AG04450 (cell line): ENCODE measurements at regions of chr1 and their contacts with region 1.

Region 1: DNA sequence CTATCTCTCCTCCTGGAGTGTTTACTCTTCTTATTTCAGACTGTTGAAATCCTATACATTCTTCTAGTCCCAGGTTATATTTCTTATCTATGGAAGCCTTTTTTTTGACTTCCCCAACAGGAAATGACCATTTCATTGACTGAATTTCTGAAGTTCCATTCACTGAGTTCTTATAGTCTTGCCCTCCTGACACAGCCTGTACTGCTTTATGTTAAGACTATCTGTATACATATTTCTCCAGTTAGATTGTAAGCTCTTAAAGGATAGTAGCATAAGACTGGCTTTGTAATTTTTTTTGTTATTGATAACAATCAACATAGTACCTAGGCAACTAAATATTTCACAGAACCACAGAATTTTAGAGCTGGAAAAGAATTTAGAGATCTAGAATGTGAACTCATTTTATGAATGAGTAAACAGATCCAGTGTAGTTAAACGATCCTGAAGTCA is 14.9 kb upstream of the MACF1 start:
- DNase-seq: no peak
- H3K4me3 ChIP-seq: no peak overlapping the region
- H3K27ac ChIP-seq: peak overlapping the region; percentile 63
- H3K27me3 ChIP-seq: no peaks in the 10 kb centered on the region
- CTCF ChIP-seq: no peak

Region 2: DNA sequence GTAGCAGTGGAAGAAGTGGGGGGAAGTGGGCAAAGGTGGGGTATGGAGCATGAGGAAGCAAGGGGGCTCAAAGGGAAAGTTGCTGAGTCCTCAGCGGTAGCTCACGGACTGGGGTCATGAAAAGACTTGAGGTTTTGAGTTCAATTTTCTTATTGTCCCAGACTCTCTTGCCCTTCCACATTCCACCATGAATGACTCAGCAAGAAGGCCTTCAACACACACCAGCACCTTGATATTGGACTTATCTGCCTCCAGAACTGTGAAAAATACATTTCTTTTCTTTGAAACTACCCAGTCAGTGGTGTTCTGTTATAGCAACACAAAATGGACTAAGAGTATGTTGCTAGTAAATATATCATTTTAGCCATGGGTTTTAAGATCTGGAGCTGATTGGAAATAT is 230.7 kb before region 1 on chr1:
- CTCF ChIA-PET with region 1: no interaction called
- POLR2A ChIA-PET with region 1: no interaction called
- DNase-seq: no peak
- H3K4me3 ChIP-seq: no peak overlapping the region
- H3K27ac ChIP-seq: no peak overlapping the region
- H3K27me3 ChIP-seq: no peaks in the 10 kb centered on the region
- CTCF ChIP-seq: no peak

Region 3: GRCh38 chr1:38973659-38974424 is 215.8 kb before region 1 on chr1:
- CTCF ChIA-PET with region 1: no interaction called
- POLR2A ChIA-PET with region 1: no interaction called
- DNase-seq: no peak
- H3K4me3 ChIP-seq: no peak overlapping the region
- H3K27ac ChIP-seq: no peak overlapping the region
- H3K27me3 ChIP-seq: no peaks in the 10 kb centered on the region
- CTCF ChIP-seq: no peak

Region 4: GRCh38 chr1:39026051-39026865 is 163.4 kb before region 1 on chr1 and contains the start of gene NDUFS5:
- CTCF ChIA-PET with region 1: no interaction called
- POLR2A ChIA-PET with region 1: no interaction called
- DNase-seq: peak; percentile 77
- H3K4me3 ChIP-seq: peak within 1 kb of the TSS; percentile 98
- H3K27ac ChIP-seq: peak within 1 kb of the TSS; percentile 99
- H3K27me3 ChIP-seq: no peaks in the 10 kb centered on the region
- CTCF ChIP-seq: no peak
- polyA plus RNA-seq, gene NDUFS5: 696 and 852 TPM in 2 replicates

Region 5: DNA sequence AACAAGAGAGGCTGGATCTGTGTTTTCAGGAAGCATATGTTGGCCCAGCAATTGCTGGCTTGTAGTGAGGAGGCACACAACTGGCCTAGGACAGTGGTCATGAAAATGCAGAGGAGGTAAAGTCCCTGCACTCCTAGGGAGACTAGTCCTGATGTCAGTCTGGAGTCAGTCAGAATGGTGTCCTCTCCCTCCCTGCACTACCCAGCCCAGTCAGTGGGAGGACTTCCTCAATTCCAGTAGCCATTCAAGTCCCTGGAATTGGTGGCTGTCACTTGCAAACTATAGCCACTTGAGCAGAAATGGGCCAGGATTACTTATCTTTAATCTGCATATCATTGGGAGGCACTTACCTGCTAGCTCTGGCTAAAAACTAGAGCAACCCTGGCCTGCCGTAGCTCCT is 144.9 kb before region 1 on chr1:
- CTCF ChIA-PET with region 1: no interaction called
- POLR2A ChIA-PET with region 1: no interaction called
- DNase-seq: no peak
- H3K4me3 ChIP-seq: no peak overlapping the region
- H3K27ac ChIP-seq: no peak overlapping the region
- H3K27me3 ChIP-seq: no peaks in the 10 kb centered on the region
- CTCF ChIP-seq: no peak

Region 6: DNA sequence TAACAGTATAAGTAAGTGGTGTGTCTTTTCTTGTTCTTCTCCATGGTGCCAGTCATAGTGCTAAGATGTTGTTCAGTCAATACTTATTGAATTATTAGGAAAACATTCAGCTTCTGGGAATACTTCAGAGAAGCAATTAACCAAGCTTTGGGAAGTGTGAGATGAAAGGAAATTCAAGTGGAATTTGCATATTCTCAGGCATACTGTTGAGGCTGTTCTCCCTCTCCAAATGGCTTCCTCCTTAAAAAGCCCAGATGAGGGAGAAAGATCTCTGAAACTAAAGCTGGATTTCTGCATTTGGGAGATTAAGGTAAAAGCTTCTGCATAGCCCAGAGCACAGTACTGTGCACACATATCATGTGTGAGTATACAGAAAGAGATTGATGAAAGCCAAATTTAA is 88.3 kb after region 1 on chr1:
- CTCF ChIA-PET with region 1: interaction called, 10 read pairs
- POLR2A ChIA-PET with region 1: no interaction called
- DNase-seq: no peak
- H3K4me3 ChIP-seq: no peak overlapping the region
- H3K27ac ChIP-seq: no peak overlapping the region
- H3K27me3 ChIP-seq: no peaks in the 10 kb centered on the region
- CTCF ChIP-seq: no peak